Calu3 (cell line): ENCODE measurements at regions of chr1 and their contacts with region 1.

Region 1: DNA sequence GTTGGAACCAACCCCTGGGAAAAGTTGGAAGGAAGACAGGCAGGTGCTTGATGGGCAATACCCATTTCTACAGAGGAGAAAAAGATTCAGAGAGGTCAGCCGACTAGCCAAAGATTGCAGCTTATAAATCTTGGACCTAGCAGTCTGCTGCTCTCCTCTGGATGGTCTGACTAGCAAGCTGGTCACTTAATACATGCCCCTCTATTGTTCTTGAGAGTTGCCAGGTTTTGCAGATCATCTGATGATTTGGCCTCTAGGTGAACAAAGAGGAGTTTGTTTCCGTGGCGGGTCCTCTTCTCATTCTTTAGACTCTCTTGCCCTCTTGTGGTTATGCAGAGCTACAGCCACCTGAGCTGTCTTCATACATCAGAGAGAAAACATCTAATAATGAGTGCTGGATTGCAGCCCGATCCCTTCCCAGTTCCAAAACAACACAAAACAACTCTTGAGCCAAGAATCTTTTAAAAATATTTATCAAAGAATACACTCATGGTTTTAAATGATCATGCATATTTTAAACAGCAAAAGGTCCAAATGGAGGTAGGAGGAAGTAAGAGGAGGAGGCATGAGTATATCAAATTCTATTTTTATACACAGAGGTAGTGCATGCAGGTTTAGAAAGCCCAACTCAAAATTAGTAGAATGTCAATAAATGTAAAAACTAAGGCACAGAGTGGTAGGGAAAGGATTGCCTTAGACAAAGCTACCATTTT is 115.7 kb downstream of the SLC30A10 start:
- DNase-seq: peak; percentile 68
- H3K4me3 Mint-ChIP-seq: no peak overlapping the region
- H3K27ac Mint-ChIP-seq: no peak overlapping the region
- H3K4me1 Mint-ChIP-seq: no peaks in the 10 kb centered on the region
- H3K27me3 Mint-ChIP-seq: peaks cover 21% of the 10 kb centered on the region
- CTCF ChIP-seq: peak; percentile 84

Region 2: DNA sequence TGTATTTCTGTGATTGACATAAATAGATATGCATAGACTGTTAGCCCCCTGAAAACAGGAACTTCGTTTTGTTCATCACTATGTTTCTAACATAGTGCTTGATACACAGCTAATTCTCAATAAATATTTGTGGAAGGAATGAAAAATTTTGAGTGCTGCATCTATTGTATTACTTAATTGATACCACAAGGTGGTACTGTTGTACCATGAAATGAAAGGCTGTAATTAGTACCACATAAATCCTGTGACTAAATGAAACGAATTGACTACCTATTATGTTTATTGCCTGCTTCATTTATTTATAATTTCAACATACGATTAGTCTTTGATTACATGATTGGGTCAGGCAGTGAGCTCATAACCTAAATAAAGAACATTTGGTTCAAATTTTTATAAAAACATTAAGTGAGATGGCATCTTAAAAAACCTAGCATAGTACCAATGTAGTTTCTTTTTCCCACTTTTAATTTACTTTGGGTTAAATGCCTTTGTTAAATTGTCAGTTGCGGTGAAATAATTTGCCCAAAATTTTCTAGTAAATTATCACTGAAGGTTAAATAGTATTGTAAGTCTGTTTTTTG is 1482.5 kb before region 1 on chr1:
- CTCF ChIA-PET with region 1: interaction called, 4 read pairs
- intact Hi-C with region 1: loop called (anchors 1 kb)
- DNase-seq: no peak
- H3K4me3 Mint-ChIP-seq: no peak overlapping the region
- H3K27ac Mint-ChIP-seq: peak overlapping the region; percentile 36
- H3K4me1 Mint-ChIP-seq: no peaks in the 10 kb centered on the region
- H3K27me3 Mint-ChIP-seq: no peaks in the 10 kb centered on the region
- CTCF ChIP-seq: peak; percentile 52

Region 3: GRCh38 chr1:219201656-219202055 is 611.0 kb before region 1 on chr1:
- CTCF ChIA-PET with region 1: no interaction called
- intact Hi-C with region 1: loop called (anchors 5 kb)
- DNase-seq: no peak
- H3K4me3 Mint-ChIP-seq: no peak overlapping the region
- H3K27ac Mint-ChIP-seq: no peak overlapping the region
- H3K4me1 Mint-ChIP-seq: no peaks in the 10 kb centered on the region
- H3K27me3 Mint-ChIP-seq: no peaks in the 10 kb centered on the region
- CTCF ChIP-seq: no peak

Region 4: DNA sequence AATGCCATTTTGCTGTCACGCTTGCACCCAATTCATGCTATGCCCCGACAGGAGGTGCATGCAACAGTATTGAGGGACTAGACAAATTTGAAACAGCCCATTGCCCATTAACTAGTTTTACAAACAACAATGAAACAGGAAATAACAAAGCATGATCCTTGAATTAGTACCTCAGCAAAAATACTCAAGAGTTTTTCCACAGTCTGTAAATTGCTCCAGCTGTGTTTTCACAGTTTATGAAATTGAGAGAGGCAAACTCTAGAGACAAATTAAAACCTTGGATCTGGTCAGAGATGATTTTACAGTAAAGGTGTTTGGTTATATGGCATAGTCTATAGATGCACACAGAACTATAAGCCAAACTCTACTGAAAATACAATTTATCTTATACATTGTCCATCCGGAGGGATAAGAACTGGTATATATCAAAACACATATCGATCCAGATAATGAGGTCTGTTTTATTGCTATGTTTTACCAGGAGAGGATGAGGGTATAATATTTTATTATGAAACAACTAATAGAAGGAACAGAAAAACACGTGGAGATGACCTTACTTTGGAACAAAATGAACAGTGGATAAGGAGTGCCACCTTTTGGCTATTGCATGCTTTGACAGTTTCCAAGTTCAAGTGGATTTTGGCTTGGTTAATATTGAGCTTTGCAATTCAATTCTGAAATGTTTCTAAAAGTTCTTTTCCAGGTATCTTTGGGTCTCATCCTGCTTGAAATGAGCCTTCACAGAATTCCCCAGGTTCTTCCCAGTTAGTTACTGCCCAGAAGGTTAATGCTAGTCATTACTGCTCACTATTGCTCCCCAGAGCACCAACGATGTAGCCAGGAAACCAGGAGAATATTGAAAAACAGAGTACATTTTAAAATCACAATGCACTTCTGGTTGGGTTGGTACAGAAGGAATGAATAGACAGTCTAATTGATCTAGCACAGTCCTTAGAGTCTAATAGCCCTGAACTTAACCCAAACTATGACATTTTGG is 245.4 kb before region 1 on chr1:
- CTCF ChIA-PET with region 1: interaction called, 7 read pairs
- intact Hi-C with region 1: loop called (anchors 5 kb)
- DNase-seq: peak; percentile 36
- H3K4me3 Mint-ChIP-seq: no peak overlapping the region
- H3K27ac Mint-ChIP-seq: no peak overlapping the region
- H3K4me1 Mint-ChIP-seq: peaks cover 23% of the 10 kb centered on the region
- H3K27me3 Mint-ChIP-seq: no peaks in the 10 kb centered on the region
- CTCF ChIP-seq: peak; percentile 45

Region 5: GRCh38 chr1:219660666-219661463 is 151.8 kb before region 1 on chr1:
- CTCF ChIA-PET with region 1: interaction called, 7 read pairs
- intact Hi-C with region 1: loop called (anchors 1 kb)
- DNase-seq: peak; percentile 88
- H3K4me3 Mint-ChIP-seq: peak overlapping the region; percentile 10
- H3K27ac Mint-ChIP-seq: no peak overlapping the region
- H3K4me1 Mint-ChIP-seq: peaks cover 9% of the 10 kb centered on the region
- H3K27me3 Mint-ChIP-seq: peaks cover 7% of the 10 kb centered on the region
- CTCF ChIP-seq: peak; percentile 75